ENCODE measurements at regions of chr5 and their contacts with region 1.

Region 1: DNA sequence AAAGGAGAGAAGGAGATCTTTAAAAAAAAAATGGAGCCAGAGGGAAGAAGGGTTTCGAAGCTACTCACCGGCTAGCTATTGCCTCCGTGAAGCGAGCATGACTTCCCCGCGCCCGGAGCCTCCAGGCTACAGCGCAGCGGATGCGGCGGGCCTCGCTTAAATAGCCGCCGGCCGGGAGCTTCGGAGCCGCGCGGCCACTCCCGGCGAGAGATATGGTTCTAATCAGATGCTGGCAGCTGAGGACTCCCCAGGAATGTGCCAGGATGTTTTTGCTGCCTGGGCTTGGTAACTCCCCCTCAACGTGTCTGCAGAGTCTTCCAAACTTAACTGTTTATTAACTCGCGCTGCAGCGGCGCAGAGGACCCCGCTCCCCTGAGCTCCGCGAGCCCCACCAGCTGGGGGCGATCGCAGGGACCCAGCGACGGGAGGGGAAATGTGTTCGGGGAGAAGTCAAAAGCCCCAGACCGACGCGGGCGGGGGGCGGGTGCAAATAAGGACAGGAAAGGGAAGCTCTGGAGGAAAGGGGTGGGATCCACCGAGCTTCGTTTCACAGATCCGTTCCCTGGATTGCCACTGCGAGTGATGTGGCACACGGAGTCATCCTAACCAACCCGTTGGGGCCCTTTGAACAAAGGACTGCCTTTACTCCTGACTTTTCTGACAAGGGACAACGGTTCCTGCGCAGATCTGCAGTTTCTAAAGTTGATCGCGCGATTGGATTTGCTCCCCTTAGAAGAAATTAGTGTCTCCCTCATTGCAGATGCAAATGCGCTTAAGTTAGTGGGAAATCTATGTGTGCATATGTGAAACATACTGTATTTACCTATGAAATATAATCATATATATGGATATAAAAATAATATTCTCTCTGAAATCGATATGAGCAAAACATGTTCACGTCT is at the start of gene DAB2:
- DNase-seq: peak; percentile 77 to 85 (median 81)
- ATAC-seq: peak; percentile 90
- H3K4me3 ChIP-seq: peak within 1 kb of the TSS; percentile 42
- H3K27ac ChIP-seq: peak within 1 kb of the TSS; percentile 52
- H3K4me1 ChIP-seq: peaks cover 10 to 35% of the 10 kb centered on the region in 2 experiments; a peak in 4 of 5 replicates
- H3K27me3 ChIP-seq: no peaks in the 10 kb centered on the region
- CTCF ChIP-seq: peak; percentile 65 to 78 (median 71)
- EP300 ChIP-seq: peak; percentile 83; the same call in 1 of the 2 replicates
- POLR2A ChIP-seq: peak; percentile 92
- RAD21 ChIP-seq: peak; percentile 52 to 62
- polyA plus RNA-seq, gene DAB2: 28.1 to 29.9 TPM

Region 2: DNA sequence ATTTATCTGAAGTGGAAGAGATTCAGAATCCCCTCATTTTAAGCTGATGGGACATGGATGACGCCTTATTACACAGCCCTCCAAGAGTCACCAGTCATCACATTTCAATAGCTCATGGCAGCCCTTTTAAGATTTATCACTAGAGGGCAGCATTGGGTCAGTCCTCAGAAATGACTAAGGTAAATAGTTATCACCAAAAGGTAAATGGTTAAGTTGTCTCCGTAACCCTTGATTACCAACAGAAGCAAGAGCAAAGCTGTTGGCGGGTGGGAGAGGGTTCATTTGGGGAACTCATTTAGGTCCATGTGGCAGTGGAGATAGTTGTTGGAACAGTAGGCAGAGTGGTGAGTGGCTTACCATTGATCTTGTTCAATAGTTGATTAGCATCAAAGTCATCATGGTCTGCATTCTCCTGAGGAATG is 48.7 kb before region 1 on chr5:
- CTCF ChIA-PET with region 1: interaction called, 5 read pairs
- POLR2A ChIA-PET with region 1: interaction called, 11 read pairs
- in situ Hi-C with region 1: no loop called
- intact Hi-C with region 1: loop called (anchors 2 kb)
- DNase-seq: peak; percentile 68 to 77 (median 69)
- ATAC-seq: peak; percentile 95
- H3K4me3 ChIP-seq: no peak overlapping the region
- H3K27ac ChIP-seq: no peak overlapping the region
- H3K4me1 ChIP-seq: no peaks in the 10 kb centered on the region
- H3K27me3 ChIP-seq: no peaks in the 10 kb centered on the region
- CTCF ChIP-seq: peak; percentile 80 to 96 (median 84)
- EP300 ChIP-seq: no peak
- POLR2A ChIP-seq: no peak
- RAD21 ChIP-seq: peak; percentile 97

Region 3: DNA sequence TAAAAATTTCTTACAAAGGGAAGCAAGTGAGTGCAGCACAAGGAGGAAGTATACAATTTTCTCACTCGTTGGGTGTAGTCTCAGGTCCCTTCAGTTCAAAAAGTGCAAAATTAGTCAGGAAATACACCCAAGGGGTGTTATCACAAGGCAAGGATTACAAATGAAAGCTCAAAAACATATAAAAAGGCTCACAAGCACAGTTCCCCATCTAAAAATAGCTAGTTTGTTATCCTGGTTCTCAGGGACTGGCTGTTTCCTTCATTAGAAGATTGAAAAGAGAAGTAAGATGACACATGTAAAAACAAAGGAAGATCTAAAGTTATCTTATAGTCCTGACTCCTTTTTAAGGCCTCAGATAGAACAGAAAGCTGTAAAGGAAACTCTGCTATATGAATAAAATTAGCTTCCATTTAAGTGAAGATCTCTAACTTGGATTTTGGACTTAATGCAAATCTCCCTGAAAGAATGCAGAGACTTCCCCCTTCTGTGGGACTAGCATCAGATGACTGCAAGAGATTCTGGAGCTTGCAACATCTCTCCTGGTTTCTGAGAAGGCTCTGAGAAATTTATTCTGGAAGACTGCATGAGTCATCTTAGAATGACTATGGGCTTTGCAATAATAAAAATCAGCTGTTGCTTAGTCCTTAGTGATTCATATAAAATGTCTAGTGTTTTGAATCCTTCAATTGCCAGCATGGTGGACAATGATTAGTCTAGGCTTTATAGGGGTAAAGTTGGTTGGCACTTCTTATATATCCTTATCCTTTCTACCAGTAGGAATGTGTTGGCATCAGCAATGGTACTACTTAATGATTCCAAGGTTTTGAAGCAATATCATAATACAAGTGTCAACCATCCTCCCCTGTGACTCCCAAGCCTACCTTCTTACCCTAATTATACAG is 25.6 kb before region 1 on chr5:
- CTCF ChIA-PET with region 1: no interaction called
- POLR2A ChIA-PET with region 1: interaction called, 44 read pairs
- in situ Hi-C with region 1: no loop called
- intact Hi-C with region 1: loop called (anchors 1 kb)
- DNase-seq: peak; percentile 43 to 83 (median 59)
- ATAC-seq: peak; percentile 90
- H3K4me3 ChIP-seq: no peak overlapping the region
- H3K27ac ChIP-seq: peak overlapping the region; percentile 77
- H3K4me1 ChIP-seq: peaks cover 4 to 34% of the 10 kb centered on the region in 2 experiments; a peak in 4 of 5 replicates
- H3K27me3 ChIP-seq: no peaks in the 10 kb centered on the region
- CTCF ChIP-seq: no peak
- EP300 ChIP-seq: peak; percentile 92
- POLR2A ChIP-seq: no peak
- RAD21 ChIP-seq: peak in 1 of 2 experiments; percentile 27; a peak in 1 of 4 replicates

Region 4: DNA sequence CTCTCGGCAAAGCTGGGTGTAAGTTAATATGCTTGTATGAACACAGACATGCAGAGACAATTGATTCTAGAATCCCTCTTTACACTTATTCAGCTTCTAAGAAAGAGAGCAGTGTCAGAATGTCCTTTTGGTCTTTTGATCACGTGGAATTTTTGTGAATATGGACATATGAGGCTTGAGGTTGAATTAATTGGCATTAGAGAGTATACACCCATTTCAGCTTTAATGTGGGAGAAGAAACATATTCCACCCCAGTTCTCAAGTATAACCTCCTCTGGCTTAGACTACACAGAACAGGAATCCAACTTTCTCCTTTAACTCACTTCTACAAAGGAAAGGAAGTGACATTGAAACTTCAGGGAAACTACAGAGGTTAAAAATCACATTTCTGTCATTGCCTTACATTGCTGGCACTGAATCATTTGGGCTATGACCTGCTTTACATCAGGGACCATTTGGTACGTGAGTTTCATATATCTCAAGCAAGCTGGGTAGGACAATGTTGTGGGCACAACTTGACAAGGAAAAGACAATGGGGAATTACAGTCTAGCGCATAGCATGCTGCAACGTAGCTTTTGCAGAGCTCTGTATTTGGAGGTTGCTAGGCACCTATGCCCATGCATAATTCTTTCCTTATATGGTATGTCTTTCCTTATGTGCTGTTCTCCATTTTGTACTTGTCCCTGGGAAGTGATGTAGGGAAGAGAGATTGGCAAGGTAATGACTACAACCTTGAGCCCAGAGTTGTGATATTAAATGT is 19.7 kb before region 1 on chr5:
- CTCF ChIA-PET with region 1: no interaction called
- POLR2A ChIA-PET with region 1: interaction called, 84 read pairs
- in situ Hi-C with region 1: no loop called
- intact Hi-C with region 1: no loop called
- DNase-seq: no peak
- ATAC-seq: no peak
- H3K4me3 ChIP-seq: no peak overlapping the region
- H3K27ac ChIP-seq: no peak overlapping the region
- H3K4me1 ChIP-seq: peaks cover 0 to 12% of the 10 kb centered on the region in 2 experiments; a peak in 4 of 5 replicates
- H3K27me3 ChIP-seq: no peaks in the 10 kb centered on the region
- CTCF ChIP-seq: no peak
- EP300 ChIP-seq: no peak
- POLR2A ChIP-seq: no peak
- RAD21 ChIP-seq: no peak

Region 5: GRCh38 chr5:39411051-39411450 is 13.9 kb before region 1 on chr5:
- CTCF ChIA-PET with region 1: no interaction called
- POLR2A ChIA-PET with region 1: interaction called, 84 read pairs
- in situ Hi-C with region 1: no loop called
- intact Hi-C with region 1: no loop called
- DNase-seq: no peak
- ATAC-seq: no peak
- H3K4me3 ChIP-seq: no peak overlapping the region
- H3K27ac ChIP-seq: no peak overlapping the region
- H3K4me1 ChIP-seq: no peaks in the 10 kb centered on the region
- H3K27me3 ChIP-seq: no peaks in the 10 kb centered on the region
- CTCF ChIP-seq: no peak
- EP300 ChIP-seq: no peak
- POLR2A ChIP-seq: no peak
- RAD21 ChIP-seq: no peak

Region 6: GRCh38 chr5:39437469-39437868 is 12.5 kb after region 1 on chr5:
- CTCF ChIA-PET with region 1: no interaction called
- POLR2A ChIA-PET with region 1: interaction called, 10 read pairs
- in situ Hi-C with region 1: no loop called
- intact Hi-C with region 1: no loop called
- DNase-seq: no peak
- ATAC-seq: no peak
- H3K4me3 ChIP-seq: no peak overlapping the region
- H3K27ac ChIP-seq: no peak overlapping the region
- H3K4me1 ChIP-seq: no peaks in the 10 kb centered on the region
- H3K27me3 ChIP-seq: peaks cover 4 to 6% of the 10 kb centered on the region in 2 experiments; a peak in 1 of 5 replicates
- CTCF ChIP-seq: no peak
- EP300 ChIP-seq: no peak
- POLR2A ChIP-seq: no peak
- RAD21 ChIP-seq: no peak

Region 7: DNA sequence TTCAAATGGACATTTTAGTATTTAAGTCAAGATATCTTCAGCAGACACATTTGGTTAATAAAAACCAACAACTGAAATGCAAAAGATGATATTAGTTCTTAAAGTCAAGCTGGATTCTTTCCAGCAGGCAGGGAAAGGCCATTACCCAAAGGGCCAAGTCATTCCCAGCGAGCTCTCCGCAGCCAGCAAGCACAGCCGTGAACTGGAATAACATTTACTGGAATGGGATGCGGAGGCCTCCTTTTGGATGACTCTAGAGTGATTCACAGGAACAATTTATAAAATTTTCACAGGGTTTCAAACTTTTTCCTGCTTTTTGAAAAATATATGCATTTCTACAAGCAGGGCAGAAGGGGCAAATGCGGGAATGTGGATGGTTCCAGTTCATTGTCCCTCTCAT is 76.4 kb after region 1 on chr5:
- CTCF ChIA-PET with region 1: no interaction called
- POLR2A ChIA-PET with region 1: no interaction called
- in situ Hi-C with region 1: no loop called
- intact Hi-C with region 1: no loop called
- DNase-seq: no peak
- ATAC-seq: no peak
- H3K4me3 ChIP-seq: no peak overlapping the region
- H3K27ac ChIP-seq: no peak overlapping the region
- H3K4me1 ChIP-seq: no peaks in the 10 kb centered on the region; a peak in 2 of 5 replicates
- H3K27me3 ChIP-seq: no peaks in the 10 kb centered on the region; a peak in 1 of 5 replicates
- CTCF ChIP-seq: no peak
- EP300 ChIP-seq: no peak
- POLR2A ChIP-seq: no peak
- RAD21 ChIP-seq: no peak

Region 8: GRCh38 chr5:40834849-40835787 is 1410.1 kb after region 1 on chr5 and contains the start of gene RPL37:
- CTCF ChIA-PET with region 1: no interaction called
- POLR2A ChIA-PET with region 1: no interaction called
- in situ Hi-C with region 1: no loop called
- intact Hi-C with region 1: loop called (anchors 10 kb)
- DNase-seq: peak; percentile 92 to 99 (median 94)
- ATAC-seq: peak; percentile 92
- H3K4me3 ChIP-seq: peak within 1 kb of the TSS; percentile 78
- H3K27ac ChIP-seq: peak within 1 kb of the TSS; percentile 96
- H3K4me1 ChIP-seq: peaks cover 5 to 28% of the 10 kb centered on the region in 2 experiments; a peak in 4 of 5 replicates
- H3K27me3 ChIP-seq: no peaks in the 10 kb centered on the region
- CTCF ChIP-seq: no peak
- EP300 ChIP-seq: peak; percentile 70
- POLR2A ChIP-seq: peak; percentile 100
- RAD21 ChIP-seq: peak; percentile 13 to 34; a peak in 3 of 4 replicates
- polyA plus RNA-seq, gene RPL37: 2,628 to 3,207 TPM

Measured in K562 (cell line).